ENCODE measurements at regions of chr12 and their contacts with region 1.

Region 1: GRCh38 chr12:49882851-49883470 is 20.7 kb downstream of the FAIM2 start:
- DNase-seq: no peak
- ATAC-seq: no peak
- H3K4me3 ChIP-seq: no peak overlapping the region
- H3K4me3 Mint-ChIP-seq: no peak overlapping the region
- H3K27ac ChIP-seq: no peak overlapping the region
- H3K27ac Mint-ChIP-seq: no peak overlapping the region
- H3K4me1 ChIP-seq: no peaks in the 10 kb centered on the region
- H3K4me1 Mint-ChIP-seq: no peaks in the 10 kb centered on the region
- H3K27me3 ChIP-seq: no peaks in the 10 kb centered on the region
- H3K27me3 Mint-ChIP-seq: peaks cover 17% of the 10 kb centered on the region
- CTCF ChIP-seq: no peak

Region 2: DNA sequence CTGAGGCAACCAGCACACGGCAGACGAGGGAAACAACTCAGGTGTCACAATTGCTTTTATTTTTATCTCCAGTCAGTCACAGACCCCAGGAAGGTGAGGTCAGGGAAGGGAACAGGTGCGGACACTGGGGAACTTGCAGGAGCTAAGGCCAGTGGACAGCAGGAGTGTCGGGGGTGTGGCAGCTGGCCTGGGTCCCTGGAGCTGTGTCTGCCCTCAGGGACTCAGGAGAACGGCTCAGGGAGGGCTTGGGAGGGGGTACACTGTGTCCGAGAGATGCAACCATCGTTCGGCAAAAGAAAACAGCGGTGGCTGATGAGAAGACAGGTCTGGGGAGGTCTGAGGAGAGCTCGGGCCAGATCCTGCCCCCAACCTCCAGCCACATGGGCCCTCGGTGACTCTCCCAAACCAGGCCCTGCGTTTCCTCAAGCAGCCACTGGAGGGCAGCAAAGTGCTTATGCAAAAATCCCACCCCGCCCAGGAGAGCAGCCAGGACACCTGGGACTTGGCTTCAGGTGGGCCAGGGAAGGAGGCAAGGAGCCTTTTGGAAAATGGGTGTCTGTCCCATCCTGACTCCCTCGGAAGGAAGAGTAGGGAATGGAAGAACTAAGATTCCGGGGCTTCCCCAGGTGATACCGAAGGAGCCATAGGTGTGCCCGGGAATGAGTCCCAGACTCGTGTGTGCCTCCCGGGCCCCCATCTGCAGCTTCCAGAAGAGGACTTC is 15.9 kb before region 1 on chr12:
- CTCF ChIA-PET with region 1: interaction called, 13 read pairs
- POLR2A ChIA-PET with region 1: no interaction called
- intact Hi-C with region 1: no loop called
- DNase-seq: peak; percentile 54 to 83 (median 74)
- ATAC-seq: peak; percentile 89
- H3K4me3 ChIP-seq: no peak overlapping the region
- H3K4me3 Mint-ChIP-seq: no peak overlapping the region
- H3K27ac ChIP-seq: no peak overlapping the region
- H3K27ac Mint-ChIP-seq: no peak overlapping the region
- H3K4me1 ChIP-seq: no peaks in the 10 kb centered on the region
- H3K4me1 Mint-ChIP-seq: no peaks in the 10 kb centered on the region
- H3K27me3 ChIP-seq: no peaks in the 10 kb centered on the region
- H3K27me3 Mint-ChIP-seq: no peaks in the 10 kb centered on the region
- CTCF ChIP-seq: peak; percentile 89